Common myeloid progenitor, CD34-positive (primary cell): ENCODE measurements at regions of chr2 and their contacts with region 1.

Region 1: DNA sequence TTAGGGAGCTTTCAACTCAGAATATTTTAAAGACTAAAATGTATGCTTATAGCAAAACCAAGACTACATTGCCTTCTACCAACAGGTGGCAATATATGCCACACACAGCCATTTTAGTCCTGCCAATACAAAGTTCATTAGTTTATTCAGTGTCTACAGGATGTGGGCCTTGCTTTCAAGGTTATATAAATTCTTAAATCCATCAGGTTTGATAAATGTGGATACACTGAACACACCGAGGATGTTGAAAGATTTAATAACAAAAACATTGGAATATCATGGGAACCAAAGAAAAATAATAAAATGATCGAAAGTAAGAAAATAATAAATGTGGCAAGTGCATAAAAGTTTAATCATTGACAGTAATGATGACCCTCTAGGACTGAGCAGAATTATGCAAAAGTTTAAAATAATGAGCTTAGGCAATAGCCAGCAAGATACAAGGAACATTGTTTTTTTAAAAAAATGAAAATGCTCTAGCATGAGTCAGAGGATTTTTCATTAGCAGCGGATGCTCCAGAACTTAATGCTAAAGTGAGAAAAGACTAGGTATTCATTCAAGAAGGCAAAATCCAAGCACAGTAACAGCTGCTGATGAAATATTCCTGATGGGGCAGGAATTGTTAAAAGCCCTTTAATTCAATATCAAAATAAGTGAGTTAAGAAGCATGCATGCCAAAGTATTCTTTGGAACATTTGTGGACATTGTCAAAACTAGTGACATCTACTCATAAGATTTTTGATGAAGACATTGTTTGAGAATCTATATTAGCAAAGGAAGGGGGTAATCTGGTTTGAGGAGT is 14.2 kb downstream of the SCN9A start:
- DNase-seq: peak; percentile 56 to 76 (median 76)
- H3K4me3 ChIP-seq: no peak overlapping the region
- H3K27ac ChIP-seq: no peak overlapping the region
- H3K4me1 ChIP-seq: peaks cover 0 to 19% (median 4%) of the 10 kb centered on the region in 4 experiments
- H3K27me3 ChIP-seq: no peaks in the 10 kb centered on the region

Region 2: DNA sequence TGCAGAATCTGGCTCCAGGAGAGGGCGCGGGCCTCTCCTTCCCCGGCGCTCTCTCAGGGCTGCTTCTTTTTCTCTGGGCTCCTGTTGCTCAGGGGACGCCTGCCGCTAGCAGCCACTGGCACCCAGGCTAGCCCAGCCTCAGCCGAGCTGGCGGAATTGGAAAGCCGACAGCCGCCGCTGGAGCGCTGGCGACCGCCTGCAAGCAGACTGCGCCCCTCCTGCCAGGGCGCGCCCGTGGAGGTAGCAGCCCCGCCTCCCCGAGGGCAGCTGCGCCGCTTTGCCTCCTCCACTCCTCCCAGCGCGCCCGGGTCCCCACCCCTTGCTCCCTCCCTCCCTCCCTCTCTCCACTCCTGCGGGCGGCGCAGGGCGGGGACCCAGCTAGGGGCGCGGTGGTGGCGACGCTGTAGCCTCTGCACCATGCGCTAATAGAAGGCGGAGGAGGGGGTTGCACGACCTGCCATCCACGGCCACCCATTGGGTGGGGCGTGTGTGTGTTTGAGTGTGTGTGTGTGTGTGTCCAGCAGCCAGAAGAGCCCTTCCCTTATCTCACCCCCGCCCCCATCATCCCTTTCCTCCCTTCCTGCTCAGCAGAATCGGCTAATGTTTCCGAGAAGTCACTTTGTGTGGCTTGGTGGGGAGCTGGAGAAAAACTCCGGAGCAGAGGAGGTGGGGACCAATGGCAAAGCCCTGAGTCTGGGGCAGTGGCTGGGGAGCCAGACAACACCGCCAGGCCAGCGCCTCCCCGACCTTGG is 14.4 kb after region 1 on chr2 and contains the start of gene SCN9A:
- CTCF ChIA-PET with region 1: interaction called, 33 read pairs
- POLR2A ChIA-PET with region 1: no interaction called
- DNase-seq: peak; percentile 90 to 98 (median 96)
- H3K4me3 ChIP-seq: peak within 1 kb of the TSS; percentile 66 to 94 (median 88)
- H3K27ac ChIP-seq: peak within 1 kb of the TSS in 1 of 2 experiments; percentile 68
- H3K4me1 ChIP-seq: peaks cover 12 to 37% (median 26%) of the 10 kb centered on the region in 4 experiments
- H3K27me3 ChIP-seq: no peaks in the 10 kb centered on the region

Region 3: DNA sequence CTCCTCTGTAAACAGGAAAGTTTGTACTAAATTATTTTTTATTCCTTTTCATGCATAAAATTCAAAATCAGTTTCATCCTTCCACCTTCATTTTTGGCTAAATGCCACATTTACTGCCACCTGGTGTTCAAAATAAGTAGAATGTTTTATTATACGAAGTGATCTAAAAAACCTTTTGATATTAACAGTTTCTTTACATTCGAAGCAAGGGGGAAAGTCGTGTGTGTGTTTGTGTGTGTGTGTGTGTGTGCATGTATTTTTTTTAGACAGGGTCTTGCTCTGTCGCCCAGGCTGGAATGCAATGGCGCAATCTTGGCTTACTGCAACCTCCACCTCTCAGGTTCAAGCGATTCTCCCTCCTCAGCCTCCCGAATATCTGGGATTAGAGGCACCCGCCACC is 23.2 kb after region 1 on chr2:
- CTCF ChIA-PET with region 1: interaction called, 37 read pairs
- POLR2A ChIA-PET with region 1: no interaction called
- DNase-seq: peak; percentile 38 to 77 (median 66)
- H3K4me3 ChIP-seq: no peak overlapping the region
- H3K27ac ChIP-seq: no peak overlapping the region
- H3K4me1 ChIP-seq: peaks cover 0 to 2% (median 0%) of the 10 kb centered on the region in 4 experiments
- H3K27me3 ChIP-seq: no peaks in the 10 kb centered on the region